Activated T-helper 1 cell treated with anti-CD3 and anti-CD28 coated beads, Interleukin-12 subunit alpha, Interleukin-12 subunit beta, Interleukin-2, Interleukin-4 antibody, amounts not matched to agents 30 ng/mL and 10 ng/mL and 1 ng/mL, durations not matched to agents 14 hours and 24 hours and 36 hours (primary cell): ENCODE measurements at regions of chr6 and their contacts with region 1.

Region 1: GRCh38 chr6:135054569-135055498 is at the start of gene HBS1L:
- DNase-seq: peak; percentile 99
- H3K4me3 Mint-ChIP-seq: peak within 1 kb of the TSS; percentile 94
- H3K27ac Mint-ChIP-seq: peak within 1 kb of the TSS; percentile 96
- H3K4me1 Mint-ChIP-seq: peaks cover 42% of the 10 kb centered on the region
- H3K27me3 Mint-ChIP-seq: peaks cover 2% of the 10 kb centered on the region
- total RNA-seq, gene HBS1L: 104 and 115 TPM in 2 replicates

Region 2: DNA sequence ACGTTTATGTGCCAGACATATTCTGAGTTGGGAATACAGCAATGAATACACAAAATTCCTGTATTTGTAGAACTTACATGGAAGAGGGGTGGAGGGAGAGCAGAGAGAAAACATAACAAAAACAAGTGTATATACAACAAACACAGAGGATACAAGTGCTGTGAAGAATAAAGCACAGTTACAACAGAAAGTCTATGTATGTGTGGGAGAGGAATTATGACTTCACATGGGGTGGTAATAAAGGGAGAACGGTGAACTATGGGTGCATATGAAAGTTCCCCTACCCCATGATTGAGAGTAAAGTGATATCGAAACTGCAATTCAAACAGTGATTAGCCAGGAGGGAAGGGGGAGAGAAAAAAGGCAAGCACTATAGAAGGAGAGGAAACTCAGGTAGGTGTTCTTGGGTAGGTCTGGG is 24.8 kb before region 1 on chr6:
- intact Hi-C with region 1: loop called (anchors 1 kb)
- DNase-seq: peak; percentile 12
- H3K4me3 Mint-ChIP-seq: peak overlapping the region; percentile 44
- H3K27ac Mint-ChIP-seq: peak overlapping the region; percentile 84
- H3K4me1 Mint-ChIP-seq: peaks cover 67% of the 10 kb centered on the region
- H3K27me3 Mint-ChIP-seq: no peaks in the 10 kb centered on the region

Region 3: DNA sequence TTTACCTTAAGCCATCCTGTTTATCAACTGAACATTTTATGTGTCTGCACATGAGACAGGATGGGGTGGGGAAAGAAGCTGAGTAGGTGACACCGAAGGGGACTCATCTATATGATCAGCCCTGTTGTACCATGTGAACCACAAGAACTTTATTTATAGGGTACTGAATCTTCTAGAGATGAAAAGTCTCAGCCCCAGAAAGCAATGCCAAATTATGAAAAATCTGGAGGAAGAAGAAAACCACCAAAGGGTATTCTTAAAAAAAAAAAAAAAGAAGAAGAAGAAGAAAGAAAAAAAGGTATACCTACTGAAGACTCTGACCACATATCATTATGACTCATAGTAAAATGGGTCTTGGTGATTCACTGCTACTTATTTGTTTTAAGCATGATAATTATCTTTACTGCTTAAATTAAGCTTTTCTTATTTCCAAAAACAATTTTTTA is 39.6 kb after region 1 on chr6:
- intact Hi-C with region 1: loop called (anchors 1 kb)
- DNase-seq: peak; percentile 20
- H3K4me3 Mint-ChIP-seq: peak overlapping the region; percentile 24
- H3K27ac Mint-ChIP-seq: peak overlapping the region; percentile 95
- H3K4me1 Mint-ChIP-seq: peaks cover 65% of the 10 kb centered on the region
- H3K27me3 Mint-ChIP-seq: peaks cover 2% of the 10 kb centered on the region

Region 4: GRCh38 chr6:135145063-135145800 is 90.4 kb after region 1 on chr6:
- intact Hi-C with region 1: loop called (anchors 2 kb)
- DNase-seq: no peak
- H3K4me3 Mint-ChIP-seq: peak overlapping the region; percentile 55
- H3K27ac Mint-ChIP-seq: peak overlapping the region; percentile 83
- H3K4me1 Mint-ChIP-seq: peaks cover 80% of the 10 kb centered on the region
- H3K27me3 Mint-ChIP-seq: no peaks in the 10 kb centered on the region

Region 5: GRCh38 chr6:135423649-135424128 is 368.9 kb after region 1 on chr6:
- intact Hi-C with region 1: loop called (anchors 5 kb)
- DNase-seq: no peak
- H3K4me3 Mint-ChIP-seq: no peak overlapping the region
- H3K27ac Mint-ChIP-seq: peak overlapping the region; percentile 16
- H3K4me1 Mint-ChIP-seq: peaks cover 11% of the 10 kb centered on the region
- H3K27me3 Mint-ChIP-seq: no peaks in the 10 kb centered on the region